ENCODE measurements at regions of chr11 and their contacts with region 1.

Region 1: GRCh38 chr11:112588252-112588694 is 327.6 kb upstream of the PLET1 start:
- DNase-seq: peak; percentile 97
- H3K4me3 ChIP-seq: no peak overlapping the region
- H3K27ac ChIP-seq: no peak overlapping the region
- H3K4me1 ChIP-seq: peaks cover 8% of the 10 kb centered on the region
- H3K27me3 ChIP-seq: no peaks in the 10 kb centered on the region
- CTCF ChIP-seq: peak; percentile 90

Region 2: GRCh38 chr11:112219476-112220232 is 368.6 kb before region 1 on chr11:
- CTCF ChIA-PET with region 1: interaction called, 3 read pairs
- POLR2A ChIA-PET with region 1: no interaction called
- intact Hi-C with region 1: loop called (anchors 1 kb)
- DNase-seq: peak; percentile 90
- H3K4me3 ChIP-seq: no peak overlapping the region
- H3K27ac ChIP-seq: no peak overlapping the region
- H3K4me1 ChIP-seq: peaks cover 27% of the 10 kb centered on the region
- H3K27me3 ChIP-seq: no peaks in the 10 kb centered on the region
- CTCF ChIP-seq: peak; percentile 90

Region 3: DNA sequence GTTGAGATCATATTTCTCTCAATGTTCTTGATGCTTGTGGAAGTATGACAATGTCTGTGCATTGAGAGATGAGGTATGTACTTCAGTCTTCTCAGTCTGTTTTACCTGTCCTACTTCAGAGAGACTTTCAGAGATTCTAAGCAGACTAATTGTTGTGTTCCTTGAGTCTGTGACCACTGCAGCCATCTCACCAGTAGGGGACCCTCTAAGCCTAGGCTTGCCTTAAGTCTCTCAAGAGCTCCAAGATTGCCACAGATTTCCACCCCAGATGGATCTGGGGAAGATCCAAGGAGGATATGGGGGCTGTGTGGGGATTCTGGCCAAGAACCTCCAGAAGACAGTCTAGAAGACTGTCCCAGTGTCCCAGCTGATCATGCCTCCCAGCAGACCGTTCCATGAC is 147.8 kb before region 1 on chr11:
- CTCF ChIA-PET with region 1: interaction called, 3 read pairs
- POLR2A ChIA-PET with region 1: no interaction called
- intact Hi-C with region 1: loop called (anchors 1 kb)
- DNase-seq: peak; percentile 74
- H3K4me3 ChIP-seq: no peak overlapping the region
- H3K27ac ChIP-seq: no peak overlapping the region
- H3K4me1 ChIP-seq: no peaks in the 10 kb centered on the region
- H3K27me3 ChIP-seq: no peaks in the 10 kb centered on the region
- CTCF ChIP-seq: peak; percentile 81

Region 4: GRCh38 chr11:112961146-112961668 is 372.9 kb after region 1 on chr11 and contains the start of gene NCAM1:
- CTCF ChIA-PET with region 1: no interaction called
- POLR2A ChIA-PET with region 1: no interaction called
- intact Hi-C with region 1: loop called (anchors 2 kb)
- DNase-seq: peak; percentile 96
- H3K4me3 ChIP-seq: peak within 1 kb of the TSS; percentile 61
- H3K27ac ChIP-seq: no peak within 1 kb of the TSS
- H3K4me1 ChIP-seq: peaks cover 3% of the 10 kb centered on the region
- H3K27me3 ChIP-seq: peaks cover 35% of the 10 kb centered on the region
- CTCF ChIP-seq: no peak
- total RNA-seq, gene NCAM1: 12.0 and 14.3 TPM in 2 replicates

Region 5: DNA sequence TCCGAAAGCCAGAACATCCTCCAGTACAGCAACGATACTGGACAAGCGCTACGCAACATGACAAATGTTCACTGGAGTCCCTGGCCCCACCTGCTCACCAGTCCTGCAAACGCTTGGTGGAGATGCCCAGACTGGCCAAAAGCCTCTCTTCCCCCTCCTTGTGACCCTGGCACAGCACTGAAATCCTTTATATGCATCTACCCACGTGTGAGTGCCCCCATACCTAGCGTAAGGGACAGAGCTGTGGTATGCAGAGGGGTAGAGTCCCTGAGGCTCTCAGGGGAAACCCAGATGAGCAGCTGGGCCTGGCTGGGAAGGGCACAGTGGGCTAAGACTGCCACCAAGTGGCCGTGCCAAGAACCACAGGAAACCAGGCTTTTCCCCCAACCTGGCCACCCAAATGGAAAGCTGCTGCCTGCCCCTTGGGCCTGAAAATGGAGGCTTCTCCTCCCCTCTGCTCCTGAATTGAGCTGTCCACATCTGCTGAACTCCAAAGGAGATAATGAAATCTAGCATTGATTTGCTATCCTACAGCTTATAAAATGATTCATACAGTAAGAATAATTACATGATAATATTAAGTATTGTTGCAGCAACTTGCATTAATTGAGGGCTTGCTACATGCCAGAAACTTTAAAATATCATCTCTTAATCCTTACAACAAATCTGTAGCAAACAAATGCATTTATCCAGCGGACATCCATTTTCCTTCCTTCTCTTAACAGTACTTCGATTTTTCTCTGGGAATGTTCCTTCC is 701.3 kb after region 1 on chr11:
- CTCF ChIA-PET with region 1: interaction called, 41 read pairs
- POLR2A ChIA-PET with region 1: no interaction called
- intact Hi-C with region 1: loop called (anchors 1 kb)
- DNase-seq: peak; percentile 83
- H3K4me3 ChIP-seq: no peak overlapping the region
- H3K27ac ChIP-seq: no peak overlapping the region
- H3K4me1 ChIP-seq: no peaks in the 10 kb centered on the region
- H3K27me3 ChIP-seq: no peaks in the 10 kb centered on the region
- CTCF ChIP-seq: peak; percentile 95

Measured in A673 (cell line).